ENCODE measurements at regions of chr15 and their contacts with region 1.

Region 1: GRCh38 chr15:92077353-92078085 is 224.0 kb downstream of the SLCO3A1 start:
- DNase-seq: peak; percentile 76
- H3K4me3 ChIP-seq: no peak overlapping the region
- H3K27ac ChIP-seq: no peak overlapping the region
- H3K4me1 ChIP-seq: peaks cover 16% of the 10 kb centered on the region
- H3K27me3 ChIP-seq: no peaks in the 10 kb centered on the region
- CTCF ChIP-seq: peak; percentile 78

Region 2: GRCh38 chr15:91049378-91050127 is 1028.0 kb before region 1 on chr15:
- CTCF ChIA-PET with region 1: no interaction called
- POLR2A ChIA-PET with region 1: no interaction called
- intact Hi-C with region 1: loop called (anchors 10 kb)
- DNase-seq: peak; percentile 76
- H3K4me3 ChIP-seq: no peak overlapping the region
- H3K27ac ChIP-seq: no peak overlapping the region
- H3K4me1 ChIP-seq: peaks cover 3% of the 10 kb centered on the region
- H3K27me3 ChIP-seq: no peaks in the 10 kb centered on the region
- CTCF ChIP-seq: peak; percentile 77

Region 3: GRCh38 chr15:91302588-91303439 is 774.7 kb before region 1 on chr15:
- CTCF ChIA-PET with region 1: no interaction called
- POLR2A ChIA-PET with region 1: no interaction called
- intact Hi-C with region 1: loop called (anchors 1 kb)
- DNase-seq: peak; percentile 86
- H3K4me3 ChIP-seq: no peak overlapping the region
- H3K27ac ChIP-seq: no peak overlapping the region
- H3K4me1 ChIP-seq: no peaks in the 10 kb centered on the region
- H3K27me3 ChIP-seq: no peaks in the 10 kb centered on the region
- CTCF ChIP-seq: peak; percentile 75

Region 4: DNA sequence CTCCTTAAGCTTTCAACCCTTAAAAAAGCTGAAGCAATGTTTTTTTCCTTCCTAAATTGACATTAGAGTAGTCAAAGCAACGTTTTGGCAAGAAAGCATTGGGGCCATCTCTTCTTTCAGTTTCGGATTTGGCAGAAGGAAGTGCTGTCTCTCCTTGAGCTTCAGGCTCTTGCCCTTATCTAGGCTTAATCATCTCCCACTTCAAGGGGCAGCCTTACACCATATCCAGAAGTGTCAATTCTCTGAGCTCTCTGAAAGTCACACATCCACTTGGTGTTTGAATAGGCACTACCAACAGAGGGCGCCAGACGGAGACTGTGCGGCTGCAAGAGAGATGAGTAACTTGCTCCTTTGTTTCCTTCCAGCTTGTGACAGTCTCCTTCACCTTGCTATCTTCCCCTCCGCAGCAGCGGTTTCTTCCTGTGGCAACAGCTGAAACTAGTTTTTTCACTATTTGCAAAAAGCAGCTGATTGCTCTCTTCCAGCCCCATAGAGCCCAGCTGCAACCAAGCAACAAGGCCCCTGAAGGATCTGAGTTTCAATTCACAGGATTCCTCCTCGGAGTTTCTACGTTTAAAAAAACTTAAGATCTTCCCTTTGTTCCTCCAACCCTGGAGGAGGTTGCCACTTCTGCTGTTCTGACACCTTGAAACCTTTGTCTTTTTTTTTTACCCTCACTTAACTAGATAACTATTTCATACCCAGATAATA is 371.0 kb before region 1 on chr15:
- CTCF ChIA-PET with region 1: interaction called, 3 read pairs
- POLR2A ChIA-PET with region 1: no interaction called
- intact Hi-C with region 1: loop called (anchors 2 kb)
- DNase-seq: peak; percentile 82
- H3K4me3 ChIP-seq: no peak overlapping the region
- H3K27ac ChIP-seq: no peak overlapping the region
- H3K4me1 ChIP-seq: no peaks in the 10 kb centered on the region
- H3K27me3 ChIP-seq: no peaks in the 10 kb centered on the region
- CTCF ChIP-seq: peak; percentile 95

Region 5: GRCh38 chr15:91807122-91807521 is 270.4 kb before region 1 on chr15:
- CTCF ChIA-PET with region 1: no interaction called
- POLR2A ChIA-PET with region 1: no interaction called
- intact Hi-C with region 1: loop called (anchors 5 kb)
- DNase-seq: peak; percentile 7
- H3K4me3 ChIP-seq: no peak overlapping the region
- H3K27ac ChIP-seq: peak overlapping the region; percentile 66
- H3K4me1 ChIP-seq: peaks cover 40% of the 10 kb centered on the region
- H3K27me3 ChIP-seq: no peaks in the 10 kb centered on the region
- CTCF ChIP-seq: no peak

Region 6: DNA sequence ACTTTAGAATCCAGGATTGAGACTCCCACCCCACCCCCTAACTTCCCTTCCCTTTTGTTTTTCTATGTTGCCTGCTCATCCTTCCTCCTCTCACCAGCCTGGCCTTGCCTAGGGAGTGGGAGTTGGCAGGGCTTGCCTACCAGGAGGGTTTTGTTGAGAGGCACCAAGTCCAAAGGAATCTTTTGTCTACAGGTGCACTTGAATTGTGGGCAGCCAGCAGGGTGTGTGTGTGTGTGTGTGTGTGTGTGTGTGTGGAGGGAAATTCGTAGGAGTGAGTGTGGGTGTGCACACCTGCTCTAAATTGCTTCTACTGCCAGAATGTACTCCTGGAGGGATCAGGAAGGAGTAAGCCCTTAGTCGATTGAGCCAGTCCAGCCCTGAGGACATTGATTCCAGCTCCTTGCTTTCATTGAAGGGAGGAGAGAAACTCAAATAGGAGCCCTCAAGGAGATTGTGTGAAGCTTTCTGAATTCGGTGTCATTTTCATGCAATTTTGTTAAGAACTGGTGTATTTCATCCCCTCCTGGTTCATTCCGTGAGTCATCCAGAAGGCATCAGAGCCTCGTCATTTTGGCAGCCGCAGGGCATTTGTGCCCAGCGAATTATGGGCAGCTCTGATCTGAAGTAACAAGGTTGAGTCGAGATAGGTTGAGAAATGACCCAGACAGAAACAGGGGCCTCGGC is 111.9 kb before region 1 on chr15:
- CTCF ChIA-PET with region 1: no interaction called
- POLR2A ChIA-PET with region 1: no interaction called
- intact Hi-C with region 1: loop called (anchors 10 kb)
- DNase-seq: no peak
- H3K4me3 ChIP-seq: no peak overlapping the region
- H3K27ac ChIP-seq: no peak overlapping the region
- H3K4me1 ChIP-seq: no peaks in the 10 kb centered on the region
- H3K27me3 ChIP-seq: no peaks in the 10 kb centered on the region
- CTCF ChIP-seq: no peak

Region 7: DNA sequence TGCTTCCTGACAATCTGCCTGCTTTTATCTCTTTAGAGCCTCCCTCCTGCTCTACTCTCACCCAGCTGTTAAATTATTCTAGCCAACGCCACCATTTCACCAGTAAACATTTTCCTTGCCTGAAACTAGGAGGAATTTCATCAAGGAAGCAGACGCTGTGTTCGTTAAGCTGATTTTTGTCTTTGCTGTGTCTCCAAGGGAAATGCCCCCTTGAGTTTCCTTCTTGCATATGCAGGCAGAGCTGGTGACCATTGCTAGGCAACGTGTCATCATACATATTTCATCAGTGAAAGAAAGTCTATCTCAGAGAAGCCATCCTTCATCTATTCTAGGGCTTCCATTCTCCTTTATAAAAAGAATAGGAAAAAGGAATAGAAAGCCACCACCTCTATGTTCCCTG is 229.1 kb after region 1 on chr15:
- CTCF ChIA-PET with region 1: no interaction called
- POLR2A ChIA-PET with region 1: no interaction called
- intact Hi-C with region 1: no loop called
- DNase-seq: peak; percentile 75
- H3K4me3 ChIP-seq: no peak overlapping the region
- H3K27ac ChIP-seq: no peak overlapping the region
- H3K4me1 ChIP-seq: no peaks in the 10 kb centered on the region
- H3K27me3 ChIP-seq: no peaks in the 10 kb centered on the region
- CTCF ChIP-seq: peak; percentile 49; the same call in 1 of the 2 replicates

Measured in A673 (cell line).